Thyroid gland (tissue), 4 donors: ENCODE measurements at regions of chr5 and their contacts with region 1.

Region 1: DNA sequence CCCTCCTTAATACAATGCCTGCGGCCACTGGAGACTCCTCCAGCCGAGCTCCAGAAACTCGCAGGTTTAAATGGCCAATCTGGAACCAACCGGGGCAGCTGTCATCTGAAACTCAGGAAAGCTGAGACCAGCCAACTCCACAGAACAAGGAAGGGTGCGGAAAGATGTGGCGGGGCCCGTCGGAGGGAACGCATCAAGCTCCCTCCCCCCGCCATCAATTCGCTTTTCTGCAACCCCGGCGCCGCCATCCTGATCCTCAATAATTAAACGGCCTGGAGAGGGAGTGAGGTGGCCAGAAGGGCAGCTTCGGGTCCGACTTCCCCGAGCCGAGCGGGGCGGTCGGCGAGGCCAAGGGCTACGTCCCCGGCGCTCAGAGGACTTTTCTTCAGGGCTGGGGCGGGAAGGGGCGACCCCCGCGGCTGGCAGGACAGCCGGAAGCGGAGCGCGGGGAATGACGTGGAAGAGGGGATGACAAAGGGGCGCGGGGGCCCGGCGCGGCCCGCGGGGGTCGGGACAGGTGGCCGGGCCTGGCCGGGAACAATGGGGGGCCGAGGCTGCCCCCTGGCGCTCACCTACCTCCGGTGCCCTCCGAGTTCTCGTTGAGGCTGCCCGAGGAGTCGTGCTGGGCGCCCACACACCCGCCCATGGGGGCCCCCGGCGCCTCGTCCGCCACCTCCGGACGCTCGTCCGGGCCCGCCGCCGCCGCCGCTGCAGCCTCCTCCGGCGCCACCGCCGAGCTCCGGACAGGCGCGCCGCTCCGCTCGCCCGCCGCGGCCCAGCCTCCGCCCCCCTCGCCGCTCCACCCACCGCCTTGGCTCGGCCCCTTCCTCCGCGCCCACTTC is at the start of gene UBTD2:
- DNase-seq: peak; percentile 83 to 86
- H3K4me3 ChIP-seq: peak within 1 kb of the TSS; percentile 66 to 91 (median 89)
- H3K27ac ChIP-seq: peak within 1 kb of the TSS; percentile 77 to 92 (median 87)
- H3K4me1 ChIP-seq: peaks cover 15 to 21% of the 10 kb centered on the region in 2 donors
- H3K27me3 ChIP-seq: no peaks in the 10 kb centered on the region
- CTCF ChIP-seq: peak in 3 of 6 experiments; percentile 23 to 56 (median 55)
- POLR2A ChIP-seq: peak in 1 of 2 donors; percentile 27
- total RNA-seq, gene UBTD2: 15.9 to 28.6 (median 22.5) TPM

Region 2: DNA sequence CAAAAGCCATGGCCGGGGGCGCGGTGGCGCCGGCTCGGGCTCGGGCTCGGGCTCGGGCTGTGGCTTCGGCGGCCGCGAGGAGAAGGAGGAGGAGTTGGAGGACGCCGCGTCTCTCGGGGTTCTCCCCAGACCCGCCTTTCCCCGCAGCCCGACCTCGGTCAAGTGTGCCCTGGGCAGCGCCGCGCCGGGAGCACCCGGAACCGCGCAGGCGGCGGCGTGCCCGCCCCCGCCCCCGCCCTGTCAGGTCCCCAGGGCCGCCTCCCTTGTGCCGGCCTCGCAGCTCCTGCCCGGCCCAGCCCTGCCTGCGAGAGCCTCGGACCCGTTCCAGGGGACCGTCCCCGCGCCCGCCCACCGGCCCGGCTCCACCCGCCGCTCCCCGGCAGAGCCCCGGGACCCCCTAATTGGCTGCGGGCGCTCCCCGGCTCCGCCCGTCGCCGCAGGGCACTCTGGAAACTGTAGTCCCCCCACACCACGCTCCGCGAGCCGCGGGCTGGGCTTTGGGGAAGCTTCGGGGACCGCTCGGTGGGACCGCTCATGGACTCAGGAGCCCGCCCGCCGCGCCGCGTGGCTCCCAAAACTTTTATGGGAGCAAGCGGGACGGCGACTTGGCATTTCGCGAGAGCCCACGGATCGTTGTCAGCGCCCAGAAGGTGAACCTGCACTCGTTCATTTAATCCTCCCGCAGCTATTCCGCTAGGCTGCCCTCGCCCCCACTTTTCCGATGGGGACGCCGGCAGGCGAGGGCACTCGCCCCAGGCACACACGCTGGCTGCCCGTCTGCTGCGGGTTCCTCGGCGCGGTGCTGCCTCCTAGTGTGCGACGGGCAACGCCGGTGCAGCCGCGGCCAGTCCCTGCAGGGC is 95.0 kb before region 1 on chr5 and contains the start of gene STK10:
- intact Hi-C with region 1: loop called (anchors 5 kb)
- DNase-seq: peak; percentile 89
- H3K4me3 ChIP-seq: peak within 1 kb of the TSS; percentile 70 to 100 (median 81)
- H3K27ac ChIP-seq: peak within 1 kb of the TSS; percentile 64 to 82 (median 74)
- H3K4me1 ChIP-seq: peaks cover 0 to 7% of the 10 kb centered on the region in 2 donors
- H3K27me3 ChIP-seq: no peaks in the 10 kb centered on the region
- CTCF ChIP-seq: peak; percentile 59 to 88 (median 62)
- POLR2A ChIP-seq: peak in 1 of 2 donors; percentile 52
- total RNA-seq, gene STK10: 5.5 to 11.6 (median 8.6) TPM